Spleen (tissue), 13 donors: ENCODE measurements at regions of chr2 and their contacts with region 1.

Region 1: DNA sequence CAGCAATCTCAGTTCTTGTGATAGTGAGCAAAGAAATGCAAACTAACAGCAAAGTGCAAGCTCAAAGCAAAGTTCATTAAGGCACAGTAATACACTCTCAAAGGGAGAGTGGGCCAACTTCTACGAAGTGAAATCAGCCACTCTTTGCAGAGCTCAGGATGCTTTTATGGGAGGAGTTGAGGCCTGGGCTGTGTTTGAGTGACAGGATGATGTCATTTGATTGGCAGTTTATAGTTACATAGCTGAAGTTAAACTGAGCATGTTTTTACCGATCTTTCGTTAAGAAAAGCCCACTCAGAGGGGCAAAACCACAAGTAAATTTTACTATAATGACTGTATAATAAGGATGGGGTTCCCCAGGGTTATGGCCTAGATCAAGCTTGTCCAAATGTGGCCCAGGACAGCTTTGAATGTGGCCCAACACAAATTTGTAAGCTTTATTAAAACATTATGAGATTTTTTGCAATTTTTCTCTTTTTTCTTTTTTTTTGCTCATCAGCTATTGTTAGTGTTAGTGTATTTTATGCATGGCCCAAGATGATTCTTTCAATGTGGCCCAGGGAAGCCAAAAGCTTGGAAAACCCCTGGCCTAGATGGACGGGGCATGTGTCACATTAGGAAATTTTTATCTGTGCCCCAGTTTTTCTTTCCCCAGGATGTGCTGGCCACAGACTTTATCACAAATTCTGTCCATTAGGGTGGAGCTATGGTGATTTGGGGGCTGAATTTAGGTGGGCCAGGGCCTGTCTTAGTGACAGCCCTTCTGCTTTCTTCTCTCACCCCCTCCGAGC is 8.3 kb upstream of the DNAH7 start:
- DNase-seq: no peak
- H3K4me3 ChIP-seq: no peak overlapping the region
- H3K27ac ChIP-seq: no peak overlapping the region
- H3K4me1 ChIP-seq: peaks cover 9 to 31% (median 24%) of the 10 kb centered on the region in 6 donors
- H3K27me3 ChIP-seq: no peaks in the 10 kb centered on the region
- CTCF ChIP-seq: no peak
- POLR2A ChIP-seq: no peak

Region 2: DNA sequence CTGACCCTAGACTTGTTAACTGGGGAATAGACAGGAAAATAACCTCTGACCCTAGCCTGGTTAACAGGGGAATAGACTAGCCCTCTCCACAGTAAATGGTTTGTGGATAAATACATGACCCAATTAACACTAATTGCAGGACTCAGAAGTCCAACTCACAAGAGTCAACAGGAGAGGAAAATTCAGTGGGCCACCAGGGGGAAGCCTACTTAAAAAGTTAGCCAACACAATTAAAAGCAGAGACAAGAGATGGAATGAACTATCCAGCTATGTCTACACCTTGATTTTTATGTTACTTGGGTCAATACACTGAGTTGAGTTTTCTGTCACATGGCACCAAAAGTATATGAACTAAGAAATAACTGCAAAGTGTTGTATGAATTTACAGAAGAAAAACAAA is 578.8 kb before region 1 on chr2:
- intact Hi-C with region 1: loop called (anchors 10 kb)
- DNase-seq: no peak
- H3K4me3 ChIP-seq: no peak overlapping the region
- H3K27ac ChIP-seq: no peak overlapping the region
- H3K4me1 ChIP-seq: peaks cover 0 to 10% (median 0%) of the 10 kb centered on the region in 6 donors
- H3K27me3 ChIP-seq: no peaks in the 10 kb centered on the region
- CTCF ChIP-seq: peak; percentile 26 to 71 (median 55)
- POLR2A ChIP-seq: no peak

Region 3: DNA sequence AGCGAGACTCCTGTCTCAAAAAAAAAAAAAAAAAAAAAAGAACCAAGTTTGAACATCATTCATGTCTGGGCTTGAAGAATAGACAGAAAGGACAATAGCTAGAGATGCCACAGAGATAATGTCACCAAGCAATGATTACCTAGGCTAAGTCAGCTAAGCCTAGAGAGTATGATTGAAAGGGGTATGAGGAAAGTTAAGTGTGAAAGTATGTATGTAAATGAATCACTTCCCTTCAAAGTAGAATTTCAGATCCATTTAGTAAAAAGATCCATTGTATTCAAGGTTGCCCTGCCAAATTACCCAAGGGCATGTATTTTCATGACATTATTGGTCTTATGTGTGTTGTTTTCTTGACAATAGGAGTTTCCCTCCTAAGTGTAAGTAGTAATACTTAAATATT is 454.0 kb before region 1 on chr2:
- intact Hi-C with region 1: no loop called
- DNase-seq: no peak
- H3K4me3 ChIP-seq: no peak overlapping the region
- H3K27ac ChIP-seq: no peak overlapping the region
- H3K4me1 ChIP-seq: peaks cover 0 to 8% (median 0%) of the 10 kb centered on the region in 6 donors
- H3K27me3 ChIP-seq: no peaks in the 10 kb centered on the region
- CTCF ChIP-seq: no peak
- POLR2A ChIP-seq: no peak

Region 4: GRCh38 chr2:196291873-196292800 is 215.2 kb after region 1 on chr2:
- intact Hi-C with region 1: loop called (anchors 10 kb)
- DNase-seq: no peak
- H3K4me3 ChIP-seq: no peak overlapping the region
- H3K27ac ChIP-seq: peak overlapping the region in 4 of 8 donors; percentile 32 to 64 (median 50)
- H3K4me1 ChIP-seq: peaks cover 8 to 69% (median 43%) of the 10 kb centered on the region in 6 donors
- H3K27me3 ChIP-seq: no peaks in the 10 kb centered on the region
- CTCF ChIP-seq: no peak
- POLR2A ChIP-seq: no peak